ENCODE measurements at regions of chr2 and their contacts with region 1.

Region 1: GRCh38 chr2:38665854-38666555 is at the start of gene GALM:
- DNase-seq: peak; percentile 93
- total RNA-seq, gene GALM: 10.8 to 18.3 TPM

Region 2: GRCh38 chr2:38598996-38599304 is 67.1 kb before region 1 on chr2:
- intact Hi-C with region 1: loop called in 1 of 2 experiments (anchors 5 kb)
- DNase-seq: no peak

Region 3: DNA sequence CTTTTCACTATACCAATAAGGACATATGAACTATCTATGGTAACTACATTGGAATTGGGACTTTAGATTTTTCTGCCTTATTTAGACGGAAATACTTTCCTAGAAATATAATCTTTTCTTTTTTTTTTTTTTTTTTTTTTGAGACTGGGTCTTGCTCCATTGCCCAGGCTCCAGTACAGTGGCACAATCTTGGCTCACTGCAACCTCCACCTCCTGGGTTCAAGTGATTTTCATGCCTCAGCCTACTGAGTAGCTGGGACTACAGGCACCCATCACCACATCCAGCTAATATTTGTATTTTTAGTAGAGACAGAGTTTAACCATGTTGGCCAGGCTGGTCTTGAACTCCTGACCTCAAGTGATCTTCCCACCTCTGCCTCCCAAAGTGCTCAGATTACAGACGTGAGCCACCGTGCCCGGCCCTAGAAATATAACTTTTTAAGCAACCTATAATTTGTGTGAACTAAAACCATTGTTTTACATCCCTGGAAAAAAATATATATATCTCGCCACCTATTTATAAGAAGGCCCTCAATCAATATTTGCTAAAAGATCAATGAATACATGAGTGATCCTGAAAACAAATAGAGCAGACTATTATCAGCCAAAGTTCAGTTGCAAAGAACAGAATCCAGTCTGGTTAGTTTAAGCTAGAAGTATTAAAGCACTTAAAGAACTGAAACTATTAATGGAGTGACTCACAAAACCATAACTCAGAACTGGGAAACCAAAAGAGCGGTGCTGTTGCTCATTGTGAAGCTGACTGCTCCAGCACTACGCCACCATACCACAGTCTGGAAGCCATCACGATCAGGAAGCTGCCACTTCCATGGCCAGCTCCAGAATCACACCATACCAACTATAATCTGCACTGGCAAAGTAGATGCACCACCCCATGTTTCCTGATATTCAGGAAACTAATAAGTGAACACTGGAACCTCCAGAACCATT is 54.9 kb before region 1 on chr2:
- intact Hi-C with region 1: loop called in 1 of 2 experiments (anchors 10 kb)
- DNase-seq: no peak